Left ventricle myocardium inferior (tissue), 1 donor: ENCODE measurements at regions of chr11 and their contacts with region 1.

Region 1: GRCh38 chr11:34585735-34586487 is 35.0 kb upstream of the EHF start:
- DNase-seq: no peak
- H3K4me3 ChIP-seq: peak overlapping the region; percentile 38
- H3K27ac ChIP-seq: no peak overlapping the region
- H3K4me1 ChIP-seq: peaks cover 7% of the 10 kb centered on the region
- H3K27me3 ChIP-seq: peaks cover 16% of the 10 kb centered on the region
- CTCF ChIP-seq: peak; percentile 75

Region 2: DNA sequence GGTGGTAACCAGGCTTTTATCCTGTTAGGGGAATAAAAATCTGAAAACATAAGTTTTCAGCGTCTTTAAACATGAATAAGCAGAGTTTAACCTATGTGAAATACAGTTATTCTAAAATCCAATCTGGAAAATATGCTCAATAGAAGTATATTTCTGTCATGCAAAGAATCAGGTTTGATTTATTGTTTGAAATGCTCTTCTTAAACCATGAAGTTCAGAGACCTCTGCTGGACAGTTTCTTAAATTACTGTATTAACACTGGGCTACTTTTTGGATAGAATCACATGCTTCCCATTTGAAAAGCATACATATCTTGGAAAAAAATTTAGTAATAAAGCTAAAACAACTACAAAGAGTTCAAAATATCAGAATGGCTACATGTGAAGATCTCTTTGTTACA is 304.9 kb after region 1 on chr11:
- intact Hi-C with region 1: loop called (anchors 2 kb)
- DNase-seq: no peak
- H3K4me3 ChIP-seq: no peak overlapping the region
- H3K27ac ChIP-seq: no peak overlapping the region
- H3K4me1 ChIP-seq: no peaks in the 10 kb centered on the region
- H3K27me3 ChIP-seq: no peaks in the 10 kb centered on the region
- CTCF ChIP-seq: peak; percentile 60